H1 (cell line): ENCODE measurements at regions of chr6 and their contacts with region 1.

Region 1: DNA sequence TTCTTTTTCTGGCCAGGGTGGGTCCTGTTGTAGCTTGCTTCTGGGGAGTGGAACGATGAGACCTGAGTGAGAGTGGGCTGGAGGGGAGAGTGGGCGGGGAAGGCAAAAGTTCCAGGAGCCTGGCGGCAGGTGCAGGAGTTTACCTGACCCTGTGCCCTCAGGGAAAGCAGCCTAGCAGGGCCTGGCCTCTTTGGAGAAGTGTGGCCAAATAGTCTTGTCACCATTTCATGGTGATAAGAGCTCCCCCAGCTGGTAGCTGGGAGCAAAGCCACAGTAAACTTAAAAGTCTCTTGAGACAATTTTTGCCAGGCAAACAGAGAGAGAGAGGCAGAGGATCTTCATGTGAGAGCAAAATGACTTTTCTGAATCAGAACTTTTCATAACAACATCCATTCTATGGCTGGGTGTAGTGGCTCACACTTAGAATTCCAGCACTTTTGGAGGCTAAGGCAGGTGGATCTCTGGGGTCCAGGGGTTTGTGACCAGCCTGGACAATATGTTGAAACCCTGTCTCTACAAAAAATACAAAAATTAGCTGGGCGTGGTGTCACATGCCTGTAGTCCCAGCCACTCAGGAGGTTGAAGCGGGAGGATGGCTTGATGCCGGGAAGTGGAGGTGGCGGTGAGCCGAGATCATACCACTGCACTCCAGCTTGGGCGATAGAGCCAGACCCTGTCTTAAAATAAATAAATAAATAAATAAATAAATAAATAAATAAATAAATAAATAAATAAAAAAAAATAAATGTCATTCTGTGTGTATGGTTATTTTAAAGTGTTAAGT is 161.8 kb upstream of the SCGN start:
- DNase-seq: peak; percentile 66 to 79
- H3K4me3 ChIP-seq: no peak overlapping the region
- H3K27ac ChIP-seq: no peak overlapping the region
- H3K4me1 ChIP-seq: no peaks in the 10 kb centered on the region
- H3K27me3 ChIP-seq: no peaks in the 10 kb centered on the region
- CTCF ChIP-seq: peak; percentile 34 to 92 (median 90)
- EP300 ChIP-seq: no peak
- POLR2A ChIP-seq: no peak
- RAD21 ChIP-seq: peak; percentile 93 to 95

Region 2: DNA sequence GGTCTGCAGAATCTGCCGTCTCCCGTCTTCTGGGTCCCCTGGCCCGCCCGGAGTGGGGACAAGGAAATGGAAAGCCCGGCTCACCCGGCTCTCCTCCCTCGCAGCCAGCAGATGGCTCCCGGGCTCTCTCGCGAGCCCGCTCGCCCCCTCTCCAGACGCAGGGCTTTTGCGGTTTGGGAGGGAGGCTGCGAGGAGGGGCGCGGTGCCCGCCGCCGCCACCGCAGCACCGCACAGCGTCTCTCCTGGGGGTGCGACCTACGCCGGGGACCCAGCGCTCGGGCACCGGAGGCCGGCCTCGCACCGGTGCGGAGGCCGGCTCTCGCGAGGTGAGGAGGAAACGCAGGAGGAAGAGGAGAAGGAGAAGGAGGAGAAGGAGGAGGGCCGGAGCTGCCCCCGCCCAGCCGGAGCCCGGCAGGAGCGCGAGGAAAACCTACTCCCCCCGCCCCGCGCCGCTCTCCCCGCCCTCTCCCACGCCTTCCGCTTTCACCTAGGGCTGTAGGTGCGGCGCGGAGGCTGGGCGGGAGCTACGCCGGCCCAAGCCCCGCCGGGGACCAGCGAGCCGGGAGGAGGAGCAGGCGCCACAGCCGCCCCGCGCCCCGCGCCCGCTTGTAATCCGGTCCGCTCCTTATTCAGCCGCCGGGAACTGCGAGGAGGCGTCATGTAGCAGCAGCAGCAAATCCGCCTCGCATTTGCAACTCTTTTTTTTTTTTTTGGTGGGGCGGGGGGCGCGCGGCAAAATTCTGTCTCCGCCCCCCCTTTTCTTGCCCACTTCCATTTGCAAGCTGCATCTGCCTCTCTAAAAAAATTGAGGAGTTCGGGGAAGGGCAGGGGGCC is 211.1 kb before region 1 on chr6 and contains the start of gene CARMIL1:
- CTCF ChIA-PET with region 1: interaction called, 38 read pairs
- POLR2A ChIA-PET with region 1: interaction called, 3 read pairs
- DNase-seq: peak; percentile 53 to 87
- H3K4me3 ChIP-seq: peak within 1 kb of the TSS; percentile 91 to 95 (median 94)
- H3K27ac ChIP-seq: peak within 1 kb of the TSS; percentile 58; the same call in 1 of the 2 replicates
- H3K4me1 ChIP-seq: peaks cover 4 to 9% (median 6%) of the 10 kb centered on the region in 4 experiments; a peak in 6 of 7 replicates
- H3K27me3 ChIP-seq: no peaks in the 10 kb centered on the region
- CTCF ChIP-seq: peak; percentile 53 to 87 (median 64)
- EP300 ChIP-seq: 0 out of 3 replicates have a peak, but pooled peaks of 1 of the 2 experiments have one; percentile 41
- POLR2A ChIP-seq: no peak; a peak in 2 of 3 replicates
- RAD21 ChIP-seq: peak; percentile 84 to 92
- total RNA-seq, gene CARMIL1: 39.0 and 40.4 TPM in 2 replicates

Region 3: GRCh38 chr6:25329161-25329817 is 160.9 kb before region 1 on chr6:
- CTCF ChIA-PET with region 1: interaction called, 16 read pairs
- POLR2A ChIA-PET with region 1: no interaction called
- DNase-seq: no peak
- H3K4me3 ChIP-seq: no peak overlapping the region
- H3K27ac ChIP-seq: no peak overlapping the region
- H3K4me1 ChIP-seq: peaks cover 0 to 25% (median 11%) of the 10 kb centered on the region in 4 experiments
- H3K27me3 ChIP-seq: no peaks in the 10 kb centered on the region
- CTCF ChIP-seq: no peak
- EP300 ChIP-seq: no peak
- POLR2A ChIP-seq: no peak
- RAD21 ChIP-seq: no peak

Region 4: DNA sequence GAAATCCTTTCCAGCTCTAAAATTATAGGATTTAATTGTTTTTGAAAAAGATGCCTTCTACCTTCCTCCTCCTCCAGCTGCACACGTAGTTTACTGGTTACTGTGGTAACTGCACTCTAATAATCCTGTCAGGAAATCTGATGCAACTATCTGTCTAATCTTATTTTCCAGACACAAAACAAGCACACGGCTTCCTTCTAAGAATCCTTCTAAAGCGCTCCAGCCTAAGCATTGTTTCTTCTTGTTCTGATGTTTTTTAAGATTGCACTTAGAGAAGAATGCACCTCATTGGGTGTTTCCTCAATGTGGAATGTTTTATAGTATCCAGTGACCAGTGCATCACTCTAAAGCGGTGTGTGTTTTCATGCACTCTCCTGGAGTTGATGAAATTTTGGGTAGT is 147.4 kb before region 1 on chr6:
- CTCF ChIA-PET with region 1: interaction called, 17 read pairs
- POLR2A ChIA-PET with region 1: no interaction called
- DNase-seq: no peak
- H3K4me3 ChIP-seq: no peak overlapping the region
- H3K27ac ChIP-seq: no peak overlapping the region
- H3K4me1 ChIP-seq: peaks cover 6 to 24% (median 14%) of the 10 kb centered on the region in 4 experiments
- H3K27me3 ChIP-seq: no peaks in the 10 kb centered on the region
- CTCF ChIP-seq: no peak
- EP300 ChIP-seq: no peak
- POLR2A ChIP-seq: no peak
- RAD21 ChIP-seq: no peak

Region 5: DNA sequence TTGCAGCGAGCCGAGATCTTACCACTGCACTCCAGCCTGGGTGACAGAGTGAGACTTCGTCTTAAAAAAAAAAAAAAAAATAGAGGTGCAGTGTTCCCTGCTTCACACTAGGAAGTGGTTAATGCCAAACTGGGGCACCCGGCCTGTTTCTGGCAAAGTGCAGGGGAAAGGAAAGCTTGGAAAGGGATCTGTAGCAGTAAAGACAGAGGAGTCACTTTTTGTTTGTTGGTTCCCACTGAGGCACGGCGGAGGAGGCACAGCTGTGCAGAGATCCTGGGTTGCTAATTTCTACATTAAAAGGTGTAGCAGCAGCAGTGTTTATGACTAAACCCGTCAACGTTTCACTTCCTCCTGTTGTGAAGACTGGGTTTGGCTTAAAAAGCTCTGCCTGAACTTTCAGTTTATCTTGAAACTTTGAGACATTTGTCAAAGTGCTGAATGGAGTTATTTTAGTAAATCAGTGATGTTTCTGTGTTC is 85.5 kb before region 1 on chr6:
- CTCF ChIA-PET with region 1: interaction called, 11 read pairs
- POLR2A ChIA-PET with region 1: no interaction called
- DNase-seq: no peak
- H3K4me3 ChIP-seq: no peak overlapping the region
- H3K27ac ChIP-seq: no peak overlapping the region
- H3K4me1 ChIP-seq: peaks cover 0 to 22% (median 17%) of the 10 kb centered on the region in 4 experiments; a peak in 6 of 7 replicates
- H3K27me3 ChIP-seq: no peaks in the 10 kb centered on the region
- CTCF ChIP-seq: no peak
- EP300 ChIP-seq: no peak
- POLR2A ChIP-seq: no peak
- RAD21 ChIP-seq: no peak

Region 6: DNA sequence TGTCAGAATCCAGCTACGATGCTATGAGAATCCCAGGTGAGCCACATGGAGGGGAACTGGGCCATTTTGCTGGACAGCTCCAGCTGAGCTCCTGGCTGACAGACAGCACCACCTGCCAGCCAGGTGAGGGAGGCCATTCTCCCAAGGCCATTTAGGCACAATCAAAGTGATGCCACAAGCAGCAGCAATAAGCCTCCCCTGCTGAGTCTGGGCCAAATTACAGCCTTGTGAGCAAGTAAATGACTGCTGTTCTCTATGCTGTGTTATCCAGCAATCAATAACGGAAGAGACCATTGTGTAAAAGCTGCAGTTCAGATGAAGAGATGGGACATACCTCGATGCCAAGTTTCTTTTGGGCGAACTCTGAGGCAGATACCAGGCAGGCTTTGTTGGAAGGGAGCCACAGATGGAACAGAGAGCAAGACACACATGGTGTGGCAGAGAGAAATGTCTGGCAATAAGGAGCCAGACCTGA is 147.8 kb after region 1 on chr6:
- CTCF ChIA-PET with region 1: no interaction called
- POLR2A ChIA-PET with region 1: no interaction called
- DNase-seq: peak; percentile 34 to 55
- H3K4me3 ChIP-seq: no peak overlapping the region
- H3K27ac ChIP-seq: no peak overlapping the region
- H3K4me1 ChIP-seq: no peaks in the 10 kb centered on the region; a peak in 1 of 7 replicates
- H3K27me3 ChIP-seq: peaks cover 0 to 2% (median 0%) of the 10 kb centered on the region in 4 experiments; a peak in 1 of 7 replicates
- CTCF ChIP-seq: peak; percentile 57 to 65 (median 61)
- EP300 ChIP-seq: no peak
- POLR2A ChIP-seq: no peak
- RAD21 ChIP-seq: peak; percentile 73 to 75

Region 7: DNA sequence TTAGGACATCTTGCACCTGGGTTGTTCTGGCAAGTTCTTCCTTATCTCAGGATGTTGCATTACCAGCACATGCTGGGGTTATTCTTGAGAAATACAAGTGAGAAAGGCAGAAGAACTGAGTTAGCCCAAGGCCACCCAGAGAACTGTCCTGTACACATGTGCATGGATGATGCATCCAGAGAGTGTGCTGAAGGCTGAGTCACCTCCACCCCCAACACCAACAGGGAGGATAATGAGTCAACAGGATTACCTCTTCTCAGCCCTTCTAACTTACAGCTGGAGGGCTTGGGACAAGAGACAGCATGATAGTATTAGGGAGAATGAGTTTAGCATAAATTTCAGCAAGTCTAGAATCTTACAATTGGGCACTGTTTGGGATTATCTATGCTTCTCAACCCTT is 170.3 kb after region 1 on chr6:
- CTCF ChIA-PET with region 1: no interaction called
- POLR2A ChIA-PET with region 1: no interaction called
- DNase-seq: no peak
- H3K4me3 ChIP-seq: no peak overlapping the region
- H3K27ac ChIP-seq: no peak overlapping the region
- H3K4me1 ChIP-seq: no peaks in the 10 kb centered on the region
- H3K27me3 ChIP-seq: no peaks in the 10 kb centered on the region
- CTCF ChIP-seq: no peak
- EP300 ChIP-seq: no peak
- POLR2A ChIP-seq: no peak
- RAD21 ChIP-seq: no peak

Region 8: GRCh38 chr6:26240154-26241032 is 750.2 kb after region 1 on chr6:
- CTCF ChIA-PET with region 1: no interaction called
- POLR2A ChIA-PET with region 1: no interaction called
- DNase-seq: peak in 1 of 2 experiments; percentile 78
- H3K4me3 ChIP-seq: peak overlapping the region; percentile 64 to 96 (median 87)
- H3K27ac ChIP-seq: peak overlapping the region; percentile 96
- H3K4me1 ChIP-seq: peaks cover 1 to 8% (median 4%) of the 10 kb centered on the region in 4 experiments; a peak in 6 of 7 replicates
- H3K27me3 ChIP-seq: no peaks in the 10 kb centered on the region
- CTCF ChIP-seq: no peak
- EP300 ChIP-seq: peak in 1 of 2 experiments; percentile 87; a peak in 1 of 3 replicates
- POLR2A ChIP-seq: peak; percentile 100
- RAD21 ChIP-seq: no peak